A673 (cell line): ENCODE measurements at regions of chr1 and their contacts with region 1.

Region 1: GRCh38 chr1:159197561-159198557 is 6.8 kb upstream of the ACKR1 start:
- DNase-seq: peak; percentile 78
- H3K4me3 ChIP-seq: no peak overlapping the region
- H3K27ac ChIP-seq: no peak overlapping the region
- H3K4me1 ChIP-seq: no peaks in the 10 kb centered on the region
- H3K27me3 ChIP-seq: peaks cover 36% of the 10 kb centered on the region
- CTCF ChIP-seq: peak; percentile 84

Region 2: GRCh38 chr1:158067662-158068061 is 1130.2 kb before region 1 on chr1:
- CTCF ChIA-PET with region 1: no interaction called
- POLR2A ChIA-PET with region 1: interaction called, 11 read pairs
- intact Hi-C with region 1: no loop called
- DNase-seq: no peak
- H3K4me3 ChIP-seq: no peak overlapping the region
- H3K27ac ChIP-seq: peak overlapping the region; percentile 23
- H3K4me1 ChIP-seq: peaks cover 45% of the 10 kb centered on the region
- H3K27me3 ChIP-seq: no peaks in the 10 kb centered on the region
- CTCF ChIP-seq: no peak

Region 3: GRCh38 chr1:159132271-159132881 is 65.5 kb before region 1 on chr1:
- CTCF ChIA-PET with region 1: interaction called, 10 read pairs
- POLR2A ChIA-PET with region 1: no interaction called
- intact Hi-C with region 1: loop called (anchors 2 kb)
- DNase-seq: peak; percentile 73
- H3K4me3 ChIP-seq: no peak overlapping the region
- H3K27ac ChIP-seq: no peak overlapping the region
- H3K4me1 ChIP-seq: no peaks in the 10 kb centered on the region
- H3K27me3 ChIP-seq: peaks cover 61% of the 10 kb centered on the region
- CTCF ChIP-seq: peak; percentile 93

Region 4: DNA sequence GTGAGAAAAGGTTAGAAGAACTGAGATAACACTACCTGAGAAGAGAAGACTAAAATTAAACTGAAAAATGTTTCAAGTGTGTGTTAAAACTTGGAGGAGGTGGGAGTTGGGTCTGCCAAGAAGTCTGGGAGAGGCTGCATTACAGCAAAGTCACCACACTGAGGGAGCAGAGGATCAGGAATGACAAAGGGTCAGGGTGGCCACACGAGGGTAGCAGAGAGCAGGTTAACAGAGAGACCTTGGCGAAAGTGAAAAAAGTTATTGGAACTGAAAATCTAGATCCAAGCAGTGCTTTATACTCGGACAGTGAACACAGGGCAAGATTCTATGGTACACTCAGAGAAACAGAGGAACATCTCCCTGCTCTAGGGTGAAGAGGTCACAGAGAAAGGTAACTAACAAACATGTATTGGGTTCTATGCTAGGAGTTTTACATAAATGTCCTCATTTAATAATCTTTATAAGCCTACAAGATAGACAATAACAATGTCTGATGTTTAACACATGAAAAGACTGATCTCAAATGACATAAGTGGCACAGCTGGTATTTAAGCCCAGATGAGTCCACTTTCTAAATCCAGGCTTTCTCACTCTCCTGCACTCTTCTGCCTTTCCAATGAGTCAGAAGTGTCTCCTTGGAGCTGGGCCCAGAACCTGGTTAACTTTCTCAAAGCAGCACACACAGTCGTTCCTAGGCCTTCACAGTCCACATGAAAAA is 36.7 kb before region 1 on chr1:
- CTCF ChIA-PET with region 1: interaction called, 3 read pairs
- POLR2A ChIA-PET with region 1: no interaction called
- intact Hi-C with region 1: loop called (anchors 5 kb)
- DNase-seq: peak; percentile 73
- H3K4me3 ChIP-seq: no peak overlapping the region
- H3K27ac ChIP-seq: no peak overlapping the region
- H3K4me1 ChIP-seq: no peaks in the 10 kb centered on the region
- H3K27me3 ChIP-seq: peaks cover 78% of the 10 kb centered on the region
- CTCF ChIP-seq: peak; percentile 95